Heart right ventricle (tissue), 16 donors: ENCODE measurements at regions of chr16 and their contacts with region 1.

Region 1: DNA sequence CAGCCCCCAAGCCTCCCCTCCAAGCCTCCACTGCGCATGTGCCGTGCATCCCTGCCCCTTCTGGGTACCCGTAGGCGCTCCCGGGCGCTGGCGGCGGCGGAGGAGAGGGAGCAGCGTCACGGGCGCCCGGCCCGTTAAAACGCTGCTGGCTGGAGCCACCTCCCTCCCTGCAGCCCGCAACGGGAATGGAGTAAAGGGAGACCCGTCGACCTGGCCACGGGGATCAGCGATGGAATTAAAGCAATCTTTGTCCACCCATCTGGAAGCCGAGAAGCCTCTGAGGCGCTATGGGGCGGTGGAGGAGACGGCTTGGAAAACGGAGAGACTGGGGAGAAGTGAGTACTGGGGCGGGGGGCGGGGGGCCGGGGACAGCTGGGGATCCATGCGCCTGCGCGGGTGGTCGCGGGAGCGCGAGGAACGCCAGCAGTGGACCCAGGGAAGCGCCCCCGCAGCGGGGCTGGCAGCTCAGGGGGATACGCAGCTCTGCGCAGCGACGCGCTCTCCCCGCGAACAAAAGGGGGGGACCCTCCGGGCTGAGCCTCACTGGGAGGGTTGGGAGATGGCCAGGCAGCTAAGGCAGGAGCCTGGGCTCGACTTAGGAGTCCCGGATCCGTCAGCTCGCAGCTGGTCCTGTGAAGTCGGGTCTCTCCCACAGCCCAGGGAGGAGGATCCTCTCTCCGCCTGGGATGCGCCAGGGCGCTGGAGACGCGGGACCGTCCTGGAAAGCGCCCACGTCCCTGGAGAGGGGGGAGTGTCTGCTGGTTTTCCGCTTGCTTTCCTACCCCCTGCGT is at the start of gene BMERB1:
- DNase-seq: peak; percentile 78 to 79
- ATAC-seq: peak; percentile 93 to 97 (median 96)
- H3K4me3 ChIP-seq: peak within 1 kb of the TSS; percentile 63 to 92 (median 82)
- H3K27ac ChIP-seq: peak within 1 kb of the TSS; percentile 45 to 87 (median 76)
- H3K4me1 ChIP-seq: peaks cover 3 to 22% (median 9%) of the 10 kb centered on the region in 9 donors
- H3K27me3 ChIP-seq: peaks cover 0 to 38% (median 0%) of the 10 kb centered on the region in 7 donors
- CTCF ChIP-seq: no peak
- total RNA-seq, gene BMERB1: 59.9 to 121 (median 87.6) TPM

Region 2: GRCh38 chr16:15404792-15405191 is 29.8 kb before region 1 on chr16:
- intact Hi-C with region 1: loop called in 1 of 10 experiments (anchors 1 kb)
- DNase-seq: peak in 1 of 2 donors; percentile 29
- ATAC-seq: peak in 7 of 8 donors; percentile 58 to 97 (median 91)
- H3K4me3 ChIP-seq: no peak overlapping the region
- H3K27ac ChIP-seq: peak overlapping the region in 7 of 10 donors; percentile 23 to 80 (median 75)
- H3K4me1 ChIP-seq: peaks cover 0 to 9% (median 3%) of the 10 kb centered on the region in 9 donors
- H3K27me3 ChIP-seq: no peaks in the 10 kb centered on the region
- CTCF ChIP-seq: no peak

Region 3: GRCh38 chr16:15482068-15482747 is 47.6 kb after region 1 on chr16:
- intact Hi-C with region 1: loop called in 1 of 10 experiments (anchors 10 kb)
- DNase-seq: peak in 1 of 2 donors; percentile 58
- ATAC-seq: peak; percentile 50 to 96 (median 84)
- H3K4me3 ChIP-seq: no peak overlapping the region
- H3K27ac ChIP-seq: peak overlapping the region in 3 of 10 donors; percentile 30 to 45 (median 34)
- H3K4me1 ChIP-seq: peaks cover 0 to 12% (median 0%) of the 10 kb centered on the region in 9 donors
- H3K27me3 ChIP-seq: no peaks in the 10 kb centered on the region
- CTCF ChIP-seq: peak in 2 of 9 donors; percentile 9 to 16

Region 4: GRCh38 chr16:15493466-15494150 is 59.0 kb after region 1 on chr16:
- intact Hi-C with region 1: loop called in 2 of 10 experiments (anchors 10 kb)
- DNase-seq: no peak
- ATAC-seq: peak in 6 of 8 donors; percentile 13 to 62 (median 26)
- H3K4me3 ChIP-seq: no peak overlapping the region
- H3K27ac ChIP-seq: peak overlapping the region in 7 of 10 donors; percentile 42 to 75 (median 63)
- H3K4me1 ChIP-seq: peaks cover 5 to 54% (median 34%) of the 10 kb centered on the region in 9 donors
- H3K27me3 ChIP-seq: no peaks in the 10 kb centered on the region
- CTCF ChIP-seq: no peak

Region 5: DNA sequence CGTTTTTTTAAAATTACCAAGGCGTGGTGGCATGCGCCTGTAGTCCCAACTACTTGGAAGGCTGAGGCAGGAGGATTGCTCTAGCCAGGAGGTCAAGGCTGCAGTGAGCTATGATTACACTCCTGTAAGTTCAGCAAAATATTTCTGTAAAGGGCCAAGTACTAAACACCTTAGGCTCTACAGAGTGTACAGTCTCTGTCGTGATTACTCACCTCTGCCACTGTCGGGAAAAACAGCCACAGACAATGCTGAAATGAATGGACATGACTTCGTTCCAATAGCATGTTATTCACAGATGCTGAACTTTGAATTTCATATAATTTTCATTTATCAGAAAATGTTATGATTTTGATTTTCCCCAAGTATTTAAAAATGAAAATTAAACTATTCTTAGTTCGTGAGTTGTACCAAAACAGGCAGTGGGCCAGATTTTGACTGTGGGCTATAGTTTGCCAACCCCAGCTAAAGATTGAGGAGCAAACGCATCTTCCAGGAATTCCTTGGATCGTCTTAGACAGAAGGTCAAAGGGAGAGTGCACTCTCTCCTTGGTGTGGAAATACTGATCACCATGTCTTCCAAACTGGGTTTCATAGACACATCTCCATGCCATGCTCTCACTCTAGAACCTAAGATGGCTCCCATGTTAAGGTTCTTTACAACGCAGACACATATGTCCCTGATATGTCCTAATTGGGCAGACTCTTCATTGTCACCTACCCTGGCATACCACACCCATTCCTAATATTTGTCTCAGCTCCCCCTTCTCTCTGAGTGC is 118.9 kb after region 1 on chr16:
- intact Hi-C with region 1: loop called in 6 of 10 experiments (anchors 5 to 10 kb)
- DNase-seq: no peak
- ATAC-seq: no peak
- H3K4me3 ChIP-seq: no peak overlapping the region
- H3K27ac ChIP-seq: no peak overlapping the region
- H3K4me1 ChIP-seq: peaks cover 0 to 11% (median 0%) of the 10 kb centered on the region in 9 donors
- H3K27me3 ChIP-seq: no peaks in the 10 kb centered on the region
- CTCF ChIP-seq: no peak

Region 6: GRCh38 chr16:15618392-15618791 is 183.8 kb after region 1 on chr16:
- intact Hi-C with region 1: loop called in 3 of 10 experiments (anchors 5 to 10 kb)
- DNase-seq: no peak
- ATAC-seq: peak in 3 of 8 donors; percentile 11 to 22 (median 18)
- H3K4me3 ChIP-seq: no peak overlapping the region
- H3K27ac ChIP-seq: peak overlapping the region in 2 of 10 donors; percentile 16 to 30
- H3K4me1 ChIP-seq: peaks cover 0 to 27% (median 20%) of the 10 kb centered on the region in 9 donors
- H3K27me3 ChIP-seq: no peaks in the 10 kb centered on the region
- CTCF ChIP-seq: no peak

Region 7: GRCh38 chr16:15782573-15783365 is 348.1 kb after region 1 on chr16:
- intact Hi-C with region 1: no loop called
- DNase-seq: no peak
- ATAC-seq: no peak
- H3K4me3 ChIP-seq: no peak overlapping the region
- H3K27ac ChIP-seq: no peak overlapping the region
- H3K4me1 ChIP-seq: no peaks in the 10 kb centered on the region
- H3K27me3 ChIP-seq: peaks cover 0 to 15% (median 7%) of the 10 kb centered on the region in 7 donors
- CTCF ChIP-seq: no peak